ENCODE measurements at regions of chr17 and their contacts with region 1.

Region 1: DNA sequence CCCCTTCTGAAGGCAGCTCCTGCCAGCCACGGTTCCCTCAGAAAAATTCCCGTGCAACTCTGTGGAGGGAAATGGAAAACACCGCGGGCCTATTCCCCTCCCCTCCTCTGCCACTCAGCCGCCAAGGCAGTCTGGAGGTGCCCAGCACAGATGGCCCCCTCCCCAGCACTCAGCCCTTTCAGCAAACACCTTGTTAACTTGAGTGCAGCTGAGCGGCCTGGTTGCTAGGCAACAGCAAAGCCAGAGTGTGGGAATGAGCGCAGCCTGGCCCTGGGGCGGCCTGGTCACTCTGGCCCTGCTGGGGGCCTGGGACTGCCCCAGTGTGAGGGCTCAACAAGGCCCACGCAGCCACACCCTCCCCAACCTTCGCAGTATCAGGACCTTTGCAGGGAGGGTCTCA is 32.8 kb downstream of the CACNA1G start:
- DNase-seq: peak; percentile 97
- H3K4me3 ChIP-seq: no peak overlapping the region
- H3K27ac ChIP-seq: peak overlapping the region in 1 of 2 experiments; percentile 41; a peak in 2 of 4 replicates
- H3K4me1 ChIP-seq: peaks cover 0 to 45% of the 10 kb centered on the region in 2 experiments; a peak in 2 of 4 replicates
- H3K27me3 ChIP-seq: no peaks in the 10 kb centered on the region
- CTCF ChIP-seq: no peak
- EP300 ChIP-seq: peak in 1 of 2 experiments; percentile 20; a peak in 1 of 4 replicates
- RAD21 ChIP-seq: peak; percentile 5; the same call in 1 of the 2 replicates

Region 2: DNA sequence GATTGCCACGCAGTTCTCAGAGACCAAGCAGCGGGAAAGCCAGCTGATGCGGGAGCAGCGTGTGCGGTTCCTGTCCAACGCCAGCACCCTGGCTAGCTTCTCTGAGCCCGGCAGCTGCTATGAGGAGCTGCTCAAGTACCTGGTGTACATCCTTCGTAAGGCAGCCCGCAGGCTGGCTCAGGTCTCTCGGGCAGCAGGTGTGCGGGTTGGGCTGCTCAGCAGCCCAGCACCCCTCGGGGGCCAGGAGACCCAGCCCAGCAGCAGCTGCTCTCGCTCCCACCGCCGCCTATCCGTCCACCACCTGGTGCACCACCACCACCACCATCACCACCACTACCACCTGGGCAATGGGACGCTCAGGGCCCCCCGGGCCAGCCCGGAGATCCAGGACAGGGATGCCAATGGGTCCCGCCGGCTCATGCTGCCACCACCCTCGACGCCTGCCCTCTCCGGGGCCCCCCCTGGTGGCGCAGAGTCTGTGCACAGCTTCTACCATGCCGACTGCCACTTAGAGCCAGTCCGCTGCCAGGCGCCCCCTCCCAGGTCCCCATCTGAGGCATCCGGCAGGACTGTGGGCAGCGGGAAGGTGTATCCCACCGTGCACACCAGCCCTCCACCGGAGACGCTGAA is 17.6 kb before region 1 on chr17:
- CTCF ChIA-PET with region 1: interaction called, 14 read pairs
- POLR2A ChIA-PET with region 1: no interaction called
- DNase-seq: no peak
- H3K4me3 ChIP-seq: no peak overlapping the region
- H3K27ac ChIP-seq: no peak overlapping the region
- H3K4me1 ChIP-seq: peaks cover 0 to 7% of the 10 kb centered on the region in 2 experiments; a peak in 1 of 4 replicates
- H3K27me3 ChIP-seq: peaks cover 8% of the 10 kb centered on the region
- CTCF ChIP-seq: 0 out of 2 replicates have a peak, but pooled peaks have one; percentile 18
- EP300 ChIP-seq: no peak
- RAD21 ChIP-seq: no peak

Region 3: GRCh38 chr17:50604513-50604912 is 11.2 kb after region 1 on chr17:
- CTCF ChIA-PET with region 1: interaction called, 26 read pairs
- POLR2A ChIA-PET with region 1: interaction called, 4 read pairs
- DNase-seq: peak; percentile 99
- H3K4me3 ChIP-seq: no peak overlapping the region
- H3K27ac ChIP-seq: peak overlapping the region in 1 of 2 experiments; percentile 93; a peak in 2 of 4 replicates
- H3K4me1 ChIP-seq: peaks cover 11 to 81% of the 10 kb centered on the region in 2 experiments
- H3K27me3 ChIP-seq: no peaks in the 10 kb centered on the region
- CTCF ChIP-seq: no peak
- EP300 ChIP-seq: peak in 1 of 2 experiments; percentile 84; a peak in 2 of 4 replicates
- RAD21 ChIP-seq: no peak; the same call in 1 of the 2 replicates